HepG2 (cell line): ENCODE measurements at regions of chr2 and their contacts with region 1.

Region 1: GRCh38 chr2:108448678-108449493 is at the start of gene GCC2:
- DNase-seq: peak; percentile 94
- ATAC-seq: peak; percentile 96
- H3K4me3 ChIP-seq: peak within 1 kb of the TSS; percentile 78 to 97 (median 85)
- H3K27ac ChIP-seq: peak within 1 kb of the TSS; percentile 76
- H3K4me1 ChIP-seq: peaks cover 29% of the 10 kb centered on the region
- H3K27me3 ChIP-seq: no peaks in the 10 kb centered on the region; a peak in 1 of 5 replicates
- CTCF ChIP-seq: no peak; the same call in 1 of the 2 replicates
- EP300 ChIP-seq: peak in 1 of 2 experiments; percentile 25; a peak in 1 of 4 replicates
- POLR2A ChIP-seq: peak; percentile 72 to 93
- RAD21 ChIP-seq: peak; percentile 16; the same call in 1 of the 2 replicates
- total RNA-seq, gene GCC2: 22.5 and 30.6 TPM in 2 replicates

Region 2: GRCh38 chr2:107936433-107937359 is 512.2 kb before region 1 on chr2:
- CTCF ChIA-PET with region 1: no interaction called
- POLR2A ChIA-PET with region 1: no interaction called
- in situ Hi-C with region 1: no loop called
- intact Hi-C with region 1: loop called (anchors 5 kb)
- DNase-seq: peak; percentile 10
- ATAC-seq: no peak
- H3K4me3 ChIP-seq: no peak overlapping the region
- H3K27ac ChIP-seq: no peak overlapping the region
- H3K4me1 ChIP-seq: no peaks in the 10 kb centered on the region
- H3K27me3 ChIP-seq: peaks cover 0 to 13% of the 10 kb centered on the region in 2 experiments; a peak in 2 of 5 replicates
- CTCF ChIP-seq: peak; percentile 61
- EP300 ChIP-seq: no peak
- POLR2A ChIP-seq: no peak
- RAD21 ChIP-seq: no peak

Region 3: GRCh38 chr2:108396845-108397244 is 52.0 kb before region 1 on chr2:
- CTCF ChIA-PET with region 1: no interaction called
- POLR2A ChIA-PET with region 1: no interaction called
- in situ Hi-C with region 1: no loop called
- intact Hi-C with region 1: loop called (anchors 2 kb)
- DNase-seq: peak; percentile 57
- ATAC-seq: peak; percentile 59; the same call in 2 of the 3 replicates
- H3K4me3 ChIP-seq: no peak overlapping the region
- H3K27ac ChIP-seq: no peak overlapping the region
- H3K4me1 ChIP-seq: peaks cover 3% of the 10 kb centered on the region
- H3K27me3 ChIP-seq: 0 out of 5 replicates have a peak, but pooled peaks cover 0 to 5% of the 10 kb centered on the region in 2 experiments
- CTCF ChIP-seq: peak; percentile 63
- EP300 ChIP-seq: no peak
- POLR2A ChIP-seq: no peak
- RAD21 ChIP-seq: no peak

Region 4: DNA sequence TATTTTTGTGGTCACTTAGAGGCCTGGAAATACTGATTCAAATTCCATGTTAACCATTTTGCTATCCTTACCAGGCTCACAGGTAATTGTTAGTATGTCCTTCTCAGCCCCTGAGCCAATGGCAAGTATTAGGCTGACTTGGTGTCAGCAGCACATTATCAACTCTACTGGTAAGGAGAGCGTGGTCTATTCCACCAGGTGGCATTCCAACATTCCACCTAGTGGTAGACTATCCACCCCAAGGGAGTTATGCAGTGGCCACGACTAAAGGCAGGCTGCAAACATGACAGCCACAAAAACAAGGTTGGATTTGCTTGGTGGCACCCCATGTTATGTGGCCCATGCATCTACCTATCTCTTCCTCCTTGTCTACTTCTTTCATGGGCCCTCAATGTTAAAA is 31.6 kb before region 1 on chr2:
- CTCF ChIA-PET with region 1: no interaction called
- POLR2A ChIA-PET with region 1: no interaction called
- in situ Hi-C with region 1: no loop called
- intact Hi-C with region 1: loop called (anchors 1 kb)
- DNase-seq: peak; percentile 80
- ATAC-seq: peak; percentile 100
- H3K4me3 ChIP-seq: no peak overlapping the region
- H3K27ac ChIP-seq: no peak overlapping the region
- H3K4me1 ChIP-seq: peaks cover 23% of the 10 kb centered on the region
- H3K27me3 ChIP-seq: no peaks in the 10 kb centered on the region
- CTCF ChIP-seq: peak; percentile 93
- EP300 ChIP-seq: no peak
- POLR2A ChIP-seq: no peak
- RAD21 ChIP-seq: peak; percentile 84

Region 5: DNA sequence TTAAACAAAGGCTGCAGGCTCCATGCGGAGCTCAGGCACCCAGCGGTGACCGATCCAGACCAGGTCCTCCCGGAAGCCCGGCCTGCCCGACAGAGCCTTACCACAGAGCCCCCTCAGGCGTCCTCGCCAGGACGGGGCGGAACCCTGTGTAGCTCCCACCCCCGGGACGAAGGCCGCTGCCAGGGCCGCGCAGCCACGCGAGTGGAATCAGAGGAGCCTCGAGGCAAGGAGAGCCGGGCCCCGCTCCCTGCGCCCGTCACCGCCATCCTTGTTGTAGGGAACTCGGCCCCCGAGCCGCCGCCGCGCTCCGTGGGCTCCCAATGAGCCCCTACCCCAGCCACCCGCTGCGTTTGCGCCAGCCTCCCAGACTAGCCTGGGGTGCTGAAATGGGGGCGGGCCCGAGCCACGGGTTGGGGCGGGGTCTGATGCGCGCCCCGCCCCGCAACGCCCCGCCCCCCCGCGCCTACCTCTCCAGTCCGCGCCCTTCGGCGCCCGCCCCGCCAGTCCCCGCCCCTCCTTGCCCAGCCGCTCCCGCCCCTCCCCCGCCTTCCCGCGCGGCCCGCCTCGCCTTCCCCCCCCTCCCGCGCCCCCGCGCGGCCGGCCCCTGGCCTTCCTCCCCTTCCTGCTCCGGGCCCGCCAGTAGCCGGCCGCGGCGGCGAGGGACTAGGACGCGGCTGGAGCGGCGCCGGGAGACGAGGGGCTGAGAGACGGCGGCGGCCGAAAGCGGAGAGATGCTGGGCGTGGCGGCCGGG is 85.1 kb after region 1 on chr2 and contains the start of gene LIMS1:
- CTCF ChIA-PET with region 1: no interaction called
- POLR2A ChIA-PET with region 1: interaction called, 26 read pairs
- in situ Hi-C with region 1: no loop called
- intact Hi-C with region 1: loop called (anchors 2 kb)
- DNase-seq: peak; percentile 82
- ATAC-seq: peak; percentile 91
- H3K4me3 ChIP-seq: peak within 1 kb of the TSS; percentile 95 to 99 (median 97)
- H3K27ac ChIP-seq: peak within 1 kb of the TSS; percentile 96
- H3K4me1 ChIP-seq: peaks cover 61% of the 10 kb centered on the region
- H3K27me3 ChIP-seq: no peaks in the 10 kb centered on the region; a peak in 1 of 5 replicates
- CTCF ChIP-seq: no peak; the same call in 1 of the 2 replicates
- EP300 ChIP-seq: peak in 1 of 2 experiments; percentile 17; a peak in 1 of 4 replicates
- POLR2A ChIP-seq: peak; percentile 97
- RAD21 ChIP-seq: peak; percentile 72
- total RNA-seq, gene LIMS1: 38.3 and 55.1 TPM in 2 replicates

Region 6: DNA sequence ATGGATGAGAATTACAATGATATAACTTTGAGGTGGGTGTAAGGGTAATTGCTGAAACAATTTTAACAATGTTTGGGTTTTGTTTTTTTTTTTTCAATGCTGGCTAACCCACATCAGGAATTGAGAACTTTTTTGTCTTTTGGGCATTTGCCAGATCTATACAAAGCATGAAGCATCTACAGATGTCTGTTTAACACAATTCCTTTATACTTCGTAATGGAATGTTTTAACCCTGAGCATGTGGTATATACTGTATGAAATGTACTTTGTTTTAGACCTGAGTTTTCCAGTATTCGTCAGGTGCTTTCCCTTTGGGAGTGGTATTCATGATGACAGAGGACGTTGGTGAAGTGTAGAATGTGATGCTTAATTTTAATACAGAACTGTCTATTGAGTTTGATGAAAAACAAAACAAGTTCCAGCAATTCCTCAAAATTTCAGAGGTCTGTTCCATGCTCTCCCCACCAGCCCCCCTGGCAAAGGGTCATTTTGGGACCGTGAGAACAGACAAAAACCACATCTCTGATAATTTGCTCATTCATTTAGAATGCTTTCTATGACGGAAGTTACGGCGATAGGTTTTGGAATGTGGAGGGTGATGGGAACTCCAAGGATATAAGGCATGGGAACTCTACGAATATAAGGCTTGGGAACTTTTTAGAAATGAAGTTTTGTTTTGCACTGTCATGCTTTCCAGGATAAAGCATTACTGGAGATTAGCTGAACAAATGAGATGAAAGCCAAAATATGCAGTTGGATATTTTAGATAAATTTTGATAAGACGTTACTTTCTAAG is 99.5 kb after region 1 on chr2:
- CTCF ChIA-PET with region 1: no interaction called
- POLR2A ChIA-PET with region 1: no interaction called
- in situ Hi-C with region 1: no loop called
- intact Hi-C with region 1: no loop called
- DNase-seq: no peak
- ATAC-seq: no peak
- H3K4me3 ChIP-seq: no peak overlapping the region
- H3K27ac ChIP-seq: no peak overlapping the region
- H3K4me1 ChIP-seq: peaks cover 16% of the 10 kb centered on the region
- H3K27me3 ChIP-seq: no peaks in the 10 kb centered on the region
- CTCF ChIP-seq: no peak
- EP300 ChIP-seq: no peak
- POLR2A ChIP-seq: no peak
- RAD21 ChIP-seq: no peak